Heart right ventricle (tissue), 16 donors: ENCODE measurements at regions of chr4 and their contacts with region 1.

Region 1: GRCh38 chr4:87679449-87680169 is 29.5 kb downstream of the DMP1 start:
- DNase-seq: peak; percentile 55 to 68
- ATAC-seq: peak; percentile 71 to 89 (median 83)
- H3K4me3 ChIP-seq: peak overlapping the region in 2 of 10 donors; percentile 1 to 3
- H3K27ac ChIP-seq: peak overlapping the region in 6 of 10 donors; percentile 25 to 68 (median 50)
- H3K4me1 ChIP-seq: peaks cover 0 to 31% (median 19%) of the 10 kb centered on the region in 9 donors
- H3K27me3 ChIP-seq: no peaks in the 10 kb centered on the region
- CTCF ChIP-seq: peak; percentile 74 to 87 (median 78)

Region 2: GRCh38 chr4:87375719-87376291 is 303.8 kb before region 1 on chr4:
- intact Hi-C with region 1: loop called in 1 of 10 experiments (anchors 10 kb)
- DNase-seq: peak in 1 of 2 donors; percentile 30
- ATAC-seq: peak in 7 of 8 donors; percentile 58 to 83 (median 69)
- H3K4me3 ChIP-seq: no peak overlapping the region
- H3K27ac ChIP-seq: peak overlapping the region in 2 of 10 donors; percentile 12 to 31
- H3K4me1 ChIP-seq: peaks cover 0 to 12% (median 4%) of the 10 kb centered on the region in 9 donors
- H3K27me3 ChIP-seq: no peaks in the 10 kb centered on the region
- CTCF ChIP-seq: peak; percentile 20 to 87 (median 72)

Region 3: DNA sequence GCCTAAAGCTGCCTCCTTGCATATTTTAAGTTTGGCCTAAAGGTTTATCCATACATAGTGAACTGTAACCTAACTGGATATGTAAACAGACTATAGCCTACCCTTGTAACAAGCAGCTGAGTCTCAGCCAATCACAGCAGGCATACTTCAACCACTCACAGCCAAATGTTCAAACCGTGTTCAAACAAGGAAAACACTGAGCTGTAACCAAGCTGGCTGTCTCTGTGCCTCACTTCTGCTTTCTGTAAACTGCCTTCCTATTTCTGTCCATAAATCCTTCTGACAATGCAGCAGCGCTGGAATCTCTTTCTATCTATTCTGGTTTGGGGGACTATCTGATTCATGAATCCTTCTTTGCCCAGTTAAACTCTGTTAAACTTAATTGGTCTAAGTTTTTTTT is 54.9 kb before region 1 on chr4:
- intact Hi-C with region 1: loop called in 1 of 10 experiments (anchors 10 kb)
- DNase-seq: no peak
- ATAC-seq: no peak
- H3K4me3 ChIP-seq: no peak overlapping the region
- H3K27ac ChIP-seq: no peak overlapping the region
- H3K4me1 ChIP-seq: peaks cover 0 to 17% (median 0%) of the 10 kb centered on the region in 9 donors
- H3K27me3 ChIP-seq: no peaks in the 10 kb centered on the region
- CTCF ChIP-seq: no peak

Region 4: GRCh38 chr4:87838890-87839591 is 159.4 kb after region 1 on chr4:
- intact Hi-C with region 1: loop called (anchors 1 to 5 kb)
- DNase-seq: peak in 1 of 2 donors; percentile 28
- ATAC-seq: peak in 4 of 8 donors; percentile 61 to 67 (median 64)
- H3K4me3 ChIP-seq: no peak overlapping the region
- H3K27ac ChIP-seq: no peak overlapping the region
- H3K4me1 ChIP-seq: peaks cover 0 to 23% (median 8%) of the 10 kb centered on the region in 9 donors
- H3K27me3 ChIP-seq: no peaks in the 10 kb centered on the region
- CTCF ChIP-seq: peak; percentile 54 to 90 (median 78)

Region 5: DNA sequence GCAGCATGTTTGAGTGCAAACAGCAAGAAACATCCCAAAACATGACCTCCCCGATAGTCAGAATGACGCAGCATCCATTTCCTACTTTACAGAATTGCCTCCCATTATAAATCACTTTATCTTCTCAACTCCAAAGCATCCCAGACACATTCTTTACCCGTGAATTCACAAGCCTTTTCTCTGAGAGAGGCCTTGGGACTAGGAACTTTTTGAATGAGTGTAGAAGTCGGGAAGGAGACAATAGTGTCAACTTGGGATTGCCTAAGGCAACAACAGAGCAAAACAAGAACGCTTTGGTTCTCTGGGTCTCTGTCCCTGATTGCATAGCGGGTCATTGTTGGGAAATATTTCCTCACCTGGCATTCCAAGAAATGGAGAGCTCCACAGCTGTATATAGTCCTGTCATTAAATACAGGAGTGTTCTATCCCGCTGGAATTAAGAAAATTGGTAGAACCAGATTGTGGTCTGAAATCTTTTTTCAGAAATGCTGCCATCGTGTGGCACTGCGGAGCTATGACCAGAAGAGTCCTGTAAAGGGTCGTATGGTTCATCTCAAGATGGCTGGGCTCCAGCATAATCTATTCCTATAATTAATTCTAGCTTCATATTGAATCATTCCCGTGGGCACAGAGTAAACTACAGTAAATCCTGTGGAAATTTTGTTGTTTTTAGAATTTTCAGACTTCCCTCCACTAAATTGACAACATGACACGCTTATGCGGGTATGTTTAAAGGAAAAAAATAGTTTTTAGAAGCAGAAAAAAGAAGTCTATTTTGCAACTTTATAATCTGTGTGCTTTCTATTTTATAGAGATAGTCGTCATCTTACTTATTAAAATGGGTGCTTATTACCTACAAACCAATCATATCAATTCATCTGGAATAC is 293.9 kb after region 1 on chr4:
- intact Hi-C with region 1: loop called in 5 of 10 experiments (anchors 5 to 10 kb)
- DNase-seq: peak; percentile 43 to 63
- ATAC-seq: peak in 7 of 8 donors; percentile 38 to 79 (median 74)
- H3K4me3 ChIP-seq: peak overlapping the region in 2 of 10 donors; percentile 8 to 12
- H3K27ac ChIP-seq: no peak overlapping the region
- H3K4me1 ChIP-seq: peaks cover 0 to 18% (median 0%) of the 10 kb centered on the region in 9 donors
- H3K27me3 ChIP-seq: peaks cover 0 to 37% (median 4%) of the 10 kb centered on the region in 7 donors
- CTCF ChIP-seq: peak; percentile 58 to 89 (median 84)

Region 6: GRCh38 chr4:88204882-88205281 is 525.3 kb after region 1 on chr4:
- intact Hi-C with region 1: loop called in 3 of 10 experiments (anchors 10 kb)
- DNase-seq: no peak
- ATAC-seq: peak in 2 of 8 donors; percentile 33 to 77
- H3K4me3 ChIP-seq: no peak overlapping the region
- H3K27ac ChIP-seq: no peak overlapping the region
- H3K4me1 ChIP-seq: peaks cover 0 to 6% (median 0%) of the 10 kb centered on the region in 9 donors
- H3K27me3 ChIP-seq: no peaks in the 10 kb centered on the region
- CTCF ChIP-seq: no peak